ENCODE measurements at regions of chr4 and their contacts with region 1.

Region 1: DNA sequence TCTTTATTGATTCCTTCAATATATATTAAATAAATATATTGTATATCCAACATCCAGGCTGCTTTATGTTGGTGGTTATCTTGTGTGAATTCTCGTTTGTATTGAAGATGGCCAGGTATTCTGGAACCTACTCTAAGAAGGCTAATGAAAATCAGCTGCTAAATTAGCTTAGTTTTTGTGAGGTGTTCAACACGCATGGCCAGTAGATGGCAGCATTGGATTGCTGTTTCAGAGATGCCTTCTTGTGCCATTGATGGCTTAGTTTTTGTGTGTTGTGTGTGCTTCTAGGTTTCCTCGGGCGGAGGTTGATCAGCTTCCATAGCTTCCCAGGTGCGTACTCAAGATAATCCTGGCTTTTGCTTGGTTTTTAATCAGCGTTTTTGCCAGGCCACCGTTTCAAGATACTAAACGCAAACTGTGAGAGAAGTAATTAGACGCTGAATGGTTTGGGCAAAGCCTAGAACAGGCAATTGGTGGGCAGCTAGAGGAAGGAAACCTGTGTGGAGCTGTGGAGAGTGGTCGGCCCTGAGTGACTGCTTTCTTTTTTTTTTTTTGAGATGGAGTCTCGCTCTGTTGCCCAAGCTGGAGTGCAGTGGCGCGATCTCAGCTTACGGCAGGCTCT is 15.1 kb downstream of the NOCT start:
- DNase-seq: peak; percentile 67
- H3K4me3 ChIP-seq: no peak overlapping the region
- H3K27ac ChIP-seq: no peak overlapping the region; a peak in 1 of 4 replicates
- H3K4me1 ChIP-seq: peaks cover 0 to 6% of the 10 kb centered on the region in 2 experiments; a peak in 1 of 4 replicates
- H3K27me3 ChIP-seq: no peaks in the 10 kb centered on the region
- CTCF ChIP-seq: peak; percentile 88
- EP300 ChIP-seq: no peak
- RAD21 ChIP-seq: peak; percentile 96

Region 2: GRCh38 chr4:137226898-137227297 is 1803.8 kb before region 1 on chr4:
- CTCF ChIA-PET with region 1: no interaction called
- POLR2A ChIA-PET with region 1: no interaction called
- DNase-seq: peak; percentile 3
- H3K4me3 ChIP-seq: no peak overlapping the region
- H3K27ac ChIP-seq: no peak overlapping the region
- H3K4me1 ChIP-seq: no peaks in the 10 kb centered on the region
- H3K27me3 ChIP-seq: no peaks in the 10 kb centered on the region
- CTCF ChIP-seq: peak; percentile 60
- EP300 ChIP-seq: no peak
- RAD21 ChIP-seq: peak; percentile 67

Region 3: DNA sequence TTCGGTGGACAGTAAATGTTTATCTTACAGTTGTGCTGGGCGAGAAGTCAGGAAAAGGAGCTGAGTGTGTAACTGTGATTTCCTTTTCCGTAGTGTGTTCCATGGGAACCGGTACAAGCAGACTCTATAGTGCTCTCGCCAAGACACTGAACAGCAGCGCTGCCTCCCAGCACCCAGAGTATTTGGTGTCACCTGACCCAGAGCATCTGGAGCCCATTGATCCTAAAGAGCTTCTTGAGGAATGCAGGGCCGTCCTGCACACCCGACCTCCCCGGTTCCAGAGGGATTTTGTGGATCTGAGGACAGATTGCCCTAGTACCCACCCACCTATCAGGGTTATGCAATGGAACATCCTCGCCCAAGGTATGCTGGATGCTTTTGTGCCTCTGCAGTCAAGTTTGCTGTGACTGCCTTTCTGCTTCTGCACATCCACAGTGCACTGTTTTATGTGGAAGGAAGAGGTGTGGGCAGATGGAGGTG is 12.3 kb after region 1 on chr4:
- CTCF ChIA-PET with region 1: interaction called, 52 read pairs
- POLR2A ChIA-PET with region 1: interaction called, 4 read pairs
- DNase-seq: no peak
- H3K4me3 ChIP-seq: no peak overlapping the region
- H3K27ac ChIP-seq: no peak overlapping the region
- H3K4me1 ChIP-seq: no peaks in the 10 kb centered on the region; a peak in 1 of 4 replicates
- H3K27me3 ChIP-seq: no peaks in the 10 kb centered on the region
- CTCF ChIP-seq: no peak
- EP300 ChIP-seq: no peak
- RAD21 ChIP-seq: no peak

Region 4: DNA sequence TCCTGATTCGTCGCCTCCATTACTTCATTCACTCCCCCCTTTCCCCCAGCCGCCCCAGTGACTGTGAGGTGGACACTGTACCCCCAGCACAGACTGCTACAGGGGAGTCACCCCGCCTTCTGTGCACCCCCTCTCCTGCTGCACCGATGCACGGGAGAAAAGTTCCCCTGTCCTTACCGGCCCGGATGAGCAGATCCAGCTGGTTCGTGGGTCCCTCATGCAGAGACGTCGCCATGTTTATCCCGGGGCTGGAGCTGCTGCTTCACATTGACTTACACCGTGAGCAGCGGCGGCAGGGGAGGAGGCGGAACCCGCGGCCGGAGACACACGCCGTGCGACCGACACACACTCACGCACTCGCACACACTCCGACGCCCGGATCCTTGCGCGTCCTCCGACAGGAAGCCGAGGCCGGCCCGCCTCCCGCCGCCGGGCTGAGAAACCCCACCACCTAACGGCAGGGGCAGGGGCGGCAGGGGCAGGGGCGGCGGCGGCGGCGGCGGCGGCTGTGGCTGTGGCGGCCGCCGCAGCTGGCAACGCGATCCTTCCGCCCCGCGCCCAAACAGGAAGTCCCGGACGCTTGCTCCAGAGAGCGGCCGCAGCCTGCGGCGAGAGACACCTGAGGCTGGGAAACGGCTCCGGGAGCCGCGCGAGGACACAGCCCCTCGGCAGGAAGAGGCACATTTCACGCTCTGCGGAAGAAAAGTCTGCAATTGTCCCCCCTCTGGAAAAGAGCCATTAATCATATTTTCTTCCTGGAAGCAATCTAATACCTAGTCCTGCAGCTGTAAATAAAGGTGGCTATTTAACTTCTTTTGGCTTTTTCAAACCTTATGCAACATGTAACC is 53.5 kb after region 1 on chr4:
- CTCF ChIA-PET with region 1: interaction called, 74 read pairs
- POLR2A ChIA-PET with region 1: no interaction called
- DNase-seq: peak; percentile 91
- H3K4me3 ChIP-seq: peak overlapping the region; percentile 68 to 84
- H3K27ac ChIP-seq: peak overlapping the region; percentile 97 to 98
- H3K4me1 ChIP-seq: peaks cover 9 to 10% of the 10 kb centered on the region in 2 experiments; a peak in 2 of 4 replicates
- H3K27me3 ChIP-seq: no peaks in the 10 kb centered on the region
- CTCF ChIP-seq: peak; percentile 39; the same call in 1 of the 2 replicates
- EP300 ChIP-seq: no peak; a peak in 1 of 4 replicates
- RAD21 ChIP-seq: no peak

Region 5: DNA sequence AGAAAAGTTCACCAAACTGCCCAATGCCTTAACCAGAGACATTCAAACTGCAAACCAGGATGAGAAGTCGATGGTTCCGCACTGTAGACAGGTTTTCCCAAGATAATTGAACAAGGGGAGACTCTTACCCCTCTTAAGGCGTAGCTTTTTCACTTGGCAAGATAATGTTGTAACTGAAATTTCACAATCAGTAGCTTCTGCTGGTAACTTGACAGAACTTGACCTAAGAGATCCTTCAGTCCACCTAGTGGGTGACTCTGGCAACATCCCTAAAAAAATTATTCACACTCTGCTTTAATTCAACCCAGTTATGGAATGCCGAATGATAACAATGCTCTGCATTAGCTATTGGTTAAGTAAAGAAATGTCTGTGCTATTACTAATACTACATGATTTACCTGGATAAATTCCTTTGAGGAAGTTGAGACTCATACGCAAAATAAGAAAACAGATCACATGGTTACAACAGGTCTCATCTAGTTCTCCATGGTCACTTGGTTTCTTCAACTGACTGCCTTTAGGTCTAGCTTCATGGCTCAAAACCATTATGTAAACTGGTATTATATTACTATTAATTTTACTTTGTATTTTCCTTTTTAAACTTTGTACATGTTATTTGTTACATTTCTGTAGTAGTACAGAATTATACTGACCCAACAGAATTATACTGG is 137.2 kb after region 1 on chr4:
- CTCF ChIA-PET with region 1: interaction called, 13 read pairs
- POLR2A ChIA-PET with region 1: no interaction called
- DNase-seq: peak; percentile 48
- H3K4me3 ChIP-seq: no peak overlapping the region
- H3K27ac ChIP-seq: no peak overlapping the region
- H3K4me1 ChIP-seq: peaks cover 0 to 6% of the 10 kb centered on the region in 2 experiments; a peak in 1 of 4 replicates
- H3K27me3 ChIP-seq: no peaks in the 10 kb centered on the region
- CTCF ChIP-seq: peak; percentile 67
- EP300 ChIP-seq: no peak
- RAD21 ChIP-seq: peak; percentile 68

Region 6: GRCh38 chr4:139295206-139295941 is 264.6 kb after region 1 on chr4:
- CTCF ChIA-PET with region 1: interaction called, 27 read pairs
- POLR2A ChIA-PET with region 1: no interaction called
- DNase-seq: peak; percentile 91
- H3K4me3 ChIP-seq: peak overlapping the region; percentile 71 to 89
- H3K27ac ChIP-seq: peak overlapping the region; percentile 64 to 86
- H3K4me1 ChIP-seq: peaks cover 16 to 20% of the 10 kb centered on the region in 2 experiments; a peak in 3 of 4 replicates
- H3K27me3 ChIP-seq: no peaks in the 10 kb centered on the region
- CTCF ChIP-seq: peak; percentile 87
- EP300 ChIP-seq: peak in 1 of 2 experiments; percentile 24; a peak in 1 of 4 replicates
- RAD21 ChIP-seq: peak; percentile 87

Region 7: GRCh38 chr4:139436122-139436521 is 405.4 kb after region 1 on chr4:
- CTCF ChIA-PET with region 1: no interaction called
- POLR2A ChIA-PET with region 1: no interaction called
- DNase-seq: no peak
- H3K4me3 ChIP-seq: no peak overlapping the region
- H3K27ac ChIP-seq: no peak overlapping the region
- H3K4me1 ChIP-seq: no peaks in the 10 kb centered on the region
- H3K27me3 ChIP-seq: no peaks in the 10 kb centered on the region
- CTCF ChIP-seq: no peak
- EP300 ChIP-seq: no peak
- RAD21 ChIP-seq: no peak